Breast epithelium (tissue), 4 donors: ENCODE measurements at regions of chr3 and their contacts with region 1.

Region 1: GRCh38 chr3:183385698-183386613 is 42.5 kb downstream of the MCF2L2 start:
- DNase-seq: no peak
- H3K4me3 ChIP-seq: no peak overlapping the region
- H3K27ac ChIP-seq: no peak overlapping the region
- H3K4me1 ChIP-seq: no peaks in the 10 kb centered on the region
- H3K27me3 ChIP-seq: no peaks in the 10 kb centered on the region
- CTCF ChIP-seq: peak; percentile 70 to 77 (median 76)
- POLR2A ChIP-seq: no peak

Region 2: GRCh38 chr3:182583545-182583944 is 802.4 kb before region 1 on chr3:
- intact Hi-C with region 1: no loop called
- DNase-seq: no peak
- H3K4me3 ChIP-seq: no peak overlapping the region
- H3K27ac ChIP-seq: no peak overlapping the region
- H3K4me1 ChIP-seq: no peaks in the 10 kb centered on the region
- H3K27me3 ChIP-seq: no peaks in the 10 kb centered on the region
- CTCF ChIP-seq: no peak
- POLR2A ChIP-seq: no peak

Region 3: DNA sequence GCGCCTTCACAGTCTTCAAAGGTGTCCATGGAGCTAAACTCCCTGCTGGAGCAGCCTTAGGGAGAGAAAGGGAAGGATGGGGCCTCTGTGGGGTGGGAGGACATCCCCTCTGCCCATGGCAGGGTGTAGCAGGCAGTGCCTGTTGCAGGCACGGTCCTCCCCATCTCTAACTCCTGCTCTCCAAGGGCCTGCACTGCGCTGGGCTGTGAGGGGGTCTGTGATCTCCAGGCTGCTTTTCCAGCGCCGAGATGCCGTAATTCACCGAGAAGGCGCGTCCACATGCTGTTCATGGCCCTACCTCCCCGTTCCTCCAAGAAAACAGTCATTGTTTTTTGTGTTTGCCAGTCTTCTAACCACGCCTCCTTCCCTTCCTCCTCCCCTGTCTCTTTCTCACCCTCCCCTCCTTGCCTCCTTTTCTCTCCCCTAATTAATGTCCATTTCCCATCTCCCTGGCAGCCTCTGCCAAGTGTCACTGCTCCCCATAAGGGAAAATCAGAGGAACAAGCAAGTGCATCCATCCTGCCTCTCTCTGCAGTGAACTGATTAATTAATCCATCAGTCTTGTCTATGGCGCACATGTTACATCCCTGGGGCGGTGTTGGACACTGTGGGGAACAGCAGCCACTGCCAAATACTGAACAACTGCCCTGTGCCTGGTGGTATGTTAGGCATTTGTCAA is 205.7 kb before region 1 on chr3:
- intact Hi-C with region 1: loop called (anchors 5 kb)
- DNase-seq: no peak
- H3K4me3 ChIP-seq: peak overlapping the region in 1 of 3 donors; percentile 72
- H3K27ac ChIP-seq: no peak overlapping the region
- H3K4me1 ChIP-seq: peaks cover 0 to 5% of the 10 kb centered on the region in 2 donors
- H3K27me3 ChIP-seq: peaks cover 0 to 23% of the 10 kb centered on the region in 2 donors
- CTCF ChIP-seq: no peak
- POLR2A ChIP-seq: no peak

Region 4: GRCh38 chr3:183468424-183468823 is 82.5 kb after region 1 on chr3:
- intact Hi-C with region 1: no loop called
- DNase-seq: no peak
- H3K4me3 ChIP-seq: no peak overlapping the region
- H3K27ac ChIP-seq: no peak overlapping the region
- H3K4me1 ChIP-seq: no peaks in the 10 kb centered on the region
- H3K27me3 ChIP-seq: no peaks in the 10 kb centered on the region
- CTCF ChIP-seq: no peak
- POLR2A ChIP-seq: no peak

Region 5: GRCh38 chr3:184459355-184459754 is 1073.4 kb after region 1 on chr3:
- intact Hi-C with region 1: loop called (anchors 10 kb)
- DNase-seq: no peak
- H3K4me3 ChIP-seq: no peak overlapping the region
- H3K27ac ChIP-seq: no peak overlapping the region
- H3K4me1 ChIP-seq: no peaks in the 10 kb centered on the region
- H3K27me3 ChIP-seq: no peaks in the 10 kb centered on the region
- CTCF ChIP-seq: no peak
- POLR2A ChIP-seq: no peak